Prostate gland (tissue), 2 donors: ENCODE measurements at regions of chr1 and their contacts with region 1.

Region 1: DNA sequence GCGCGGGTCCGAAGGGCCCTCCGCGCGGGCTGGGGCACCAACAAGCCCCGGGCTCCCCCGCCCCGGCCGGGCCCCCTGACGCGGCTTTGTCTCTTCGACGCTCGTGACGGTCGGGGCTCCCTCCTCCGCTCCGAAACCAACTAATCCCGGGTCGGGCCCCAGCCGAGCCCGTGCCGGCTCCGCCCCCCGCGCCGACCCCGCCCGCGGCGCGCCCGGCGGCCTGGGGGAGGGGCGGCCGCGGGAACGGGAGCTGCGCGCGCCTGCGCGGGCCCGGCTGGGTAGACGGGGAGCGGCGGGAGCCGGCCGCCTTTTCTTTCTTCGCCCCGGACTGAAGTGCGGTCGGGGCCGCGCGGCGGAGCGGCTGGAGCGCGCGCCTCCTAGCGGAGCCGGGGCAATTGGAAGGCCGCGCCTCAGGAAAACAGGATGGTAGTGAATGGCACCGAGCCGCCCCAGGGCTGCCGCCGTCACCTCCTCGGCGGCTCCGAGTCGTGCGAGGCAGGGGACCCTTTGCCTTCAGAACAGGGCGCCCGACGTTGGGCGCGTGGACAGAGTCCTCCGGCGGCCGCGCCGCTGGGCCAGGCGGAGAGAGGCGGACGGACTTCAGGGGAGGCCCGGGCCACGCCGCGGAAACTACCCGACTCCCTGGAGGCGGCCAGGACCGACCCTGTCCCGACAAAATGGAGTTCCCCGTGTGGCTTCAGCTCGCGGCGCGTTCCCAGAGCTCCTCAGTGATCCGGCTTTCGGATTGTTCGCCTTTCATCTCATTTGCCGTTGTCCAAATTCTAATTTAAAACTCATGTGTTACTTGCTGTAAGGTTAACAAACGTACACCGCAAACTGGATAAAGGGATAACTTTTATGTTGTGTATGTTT is at the start of gene TP53BP2:
- DNase-seq: peak; percentile 88
- H3K4me3 ChIP-seq: peak within 1 kb of the TSS; percentile 91 to 92
- H3K27ac ChIP-seq: peak within 1 kb of the TSS; percentile 98
- H3K4me1 ChIP-seq: no peaks in the 10 kb centered on the region
- H3K27me3 ChIP-seq: no peaks in the 10 kb centered on the region
- CTCF ChIP-seq: peak; percentile 66 to 91 (median 84)
- POLR2A ChIP-seq: peak; percentile 78
- total RNA-seq, gene TP53BP2: 28.0 to 103 TPM

Region 2: DNA sequence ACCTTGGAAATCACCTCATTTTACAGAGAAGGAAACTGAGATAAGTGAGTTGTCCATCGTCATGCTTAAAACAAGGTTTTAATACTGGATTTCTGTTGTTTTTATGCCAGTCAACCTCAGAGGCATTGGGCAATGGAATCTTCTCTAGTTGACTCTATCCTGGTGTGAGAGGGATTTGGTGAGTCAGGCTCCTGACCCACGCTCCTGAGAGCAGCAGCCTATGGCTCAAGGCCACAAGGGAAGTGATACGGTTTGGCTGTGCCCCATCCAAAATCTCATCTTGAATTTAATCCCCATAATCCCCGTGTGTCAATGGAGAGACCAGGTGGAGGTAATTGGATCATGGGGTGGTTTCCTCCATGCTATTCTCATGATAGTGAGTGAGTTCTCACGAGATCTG is 793.1 kb before region 1 on chr1:
- intact Hi-C with region 1: no loop called
- DNase-seq: no peak
- H3K4me3 ChIP-seq: no peak overlapping the region
- H3K27ac ChIP-seq: no peak overlapping the region
- H3K4me1 ChIP-seq: no peaks in the 10 kb centered on the region
- H3K27me3 ChIP-seq: no peaks in the 10 kb centered on the region
- CTCF ChIP-seq: no peak
- POLR2A ChIP-seq: no peak

Region 3: GRCh38 chr1:223771814-223772770 is 74.0 kb before region 1 on chr1:
- intact Hi-C with region 1: loop called (anchors 10 kb)
- DNase-seq: no peak
- H3K4me3 ChIP-seq: no peak overlapping the region
- H3K27ac ChIP-seq: peak overlapping the region; percentile 9 to 35
- H3K4me1 ChIP-seq: no peaks in the 10 kb centered on the region
- H3K27me3 ChIP-seq: no peaks in the 10 kb centered on the region
- CTCF ChIP-seq: no peak
- POLR2A ChIP-seq: no peak